Endothelial cell of umbilical vein (primary cell): ENCODE measurements at regions of chr7 and their contacts with region 1.

Region 1: GRCh38 chr7:101602484-101603241 is 26.4 kb downstream of the MYL10 start:
- DNase-seq: peak; percentile 64
- H3K4me3 ChIP-seq: no peak overlapping the region
- H3K27ac ChIP-seq: no peak overlapping the region
- H3K4me1 ChIP-seq: no peaks in the 10 kb centered on the region
- H3K27me3 ChIP-seq: no peaks in the 10 kb centered on the region
- CTCF ChIP-seq: peak; percentile 87 to 99
- POLR2A ChIP-seq: no peak

Region 2: GRCh38 chr7:101395376-101395775 is 207.3 kb before region 1 on chr7:
- CTCF ChIA-PET with region 1: no interaction called
- POLR2A ChIA-PET with region 1: no interaction called
- dilution Hi-C with region 1: no loop called
- intact Hi-C with region 1: no loop called
- DNase-seq: no peak
- H3K4me3 ChIP-seq: no peak overlapping the region
- H3K27ac ChIP-seq: no peak overlapping the region
- H3K4me1 ChIP-seq: no peaks in the 10 kb centered on the region
- H3K27me3 ChIP-seq: peaks cover 4 to 6% of the 10 kb centered on the region in 2 experiments
- CTCF ChIP-seq: no peak
- POLR2A ChIP-seq: no peak

Region 3: DNA sequence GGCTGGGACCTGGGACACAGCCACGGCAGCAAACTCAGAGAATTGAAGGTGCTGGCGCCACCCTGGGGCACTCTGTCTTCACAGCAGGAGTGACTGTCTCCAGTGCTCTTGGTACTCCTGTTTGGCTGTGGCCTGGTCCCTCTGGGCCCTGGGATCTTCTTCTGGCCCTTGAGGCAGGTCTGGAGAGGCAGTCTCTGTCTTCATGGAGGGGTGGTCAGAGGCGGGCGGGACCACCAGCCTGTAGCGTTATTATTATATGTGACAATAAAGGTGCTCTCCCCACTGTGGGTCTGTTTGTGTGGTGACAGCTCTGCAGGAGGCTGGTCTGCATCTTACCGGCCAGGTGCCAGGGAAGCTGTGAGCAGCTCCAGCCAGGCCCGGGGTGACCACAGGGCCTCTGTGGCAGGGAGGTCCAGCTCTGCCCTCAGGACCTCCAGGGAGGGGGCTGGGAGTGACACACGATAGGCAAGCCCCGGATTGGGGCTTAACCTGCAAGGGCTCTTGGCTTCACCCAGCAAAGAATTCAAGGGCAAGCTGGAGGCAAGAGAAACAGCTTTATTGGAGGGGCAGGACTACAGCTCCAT is 43.8 kb before region 1 on chr7:
- CTCF ChIA-PET with region 1: no interaction called
- POLR2A ChIA-PET with region 1: no interaction called
- dilution Hi-C with region 1: no loop called
- intact Hi-C with region 1: no loop called
- DNase-seq: no peak
- H3K4me3 ChIP-seq: no peak overlapping the region
- H3K27ac ChIP-seq: no peak overlapping the region
- H3K4me1 ChIP-seq: no peaks in the 10 kb centered on the region
- H3K27me3 ChIP-seq: peaks cover 0 to 4% of the 10 kb centered on the region in 2 experiments
- CTCF ChIP-seq: peak in 1 of 2 donors; percentile 6
- POLR2A ChIP-seq: no peak

Region 4: GRCh38 chr7:101681170-101682007 is 78.7 kb after region 1 on chr7:
- CTCF ChIA-PET with region 1: interaction called, 14 read pairs
- POLR2A ChIA-PET with region 1: no interaction called
- dilution Hi-C with region 1: no loop called
- intact Hi-C with region 1: loop called (anchors 5 kb)
- DNase-seq: peak; percentile 88
- H3K4me3 ChIP-seq: no peak overlapping the region
- H3K27ac ChIP-seq: no peak overlapping the region
- H3K4me1 ChIP-seq: peaks cover 11% of the 10 kb centered on the region
- H3K27me3 ChIP-seq: no peaks in the 10 kb centered on the region
- CTCF ChIP-seq: no peak
- POLR2A ChIP-seq: no peak

Region 5: GRCh38 chr7:102236592-102237287 is 634.1 kb after region 1 on chr7:
- CTCF ChIA-PET with region 1: interaction called, 25 read pairs
- POLR2A ChIA-PET with region 1: no interaction called
- dilution Hi-C with region 1: no loop called
- intact Hi-C with region 1: loop called (anchors 1 kb)
- DNase-seq: peak; percentile 57
- H3K4me3 ChIP-seq: no peak overlapping the region
- H3K27ac ChIP-seq: no peak overlapping the region
- H3K4me1 ChIP-seq: no peaks in the 10 kb centered on the region
- H3K27me3 ChIP-seq: no peaks in the 10 kb centered on the region
- CTCF ChIP-seq: peak; percentile 69 to 79
- POLR2A ChIP-seq: no peak

Region 6: GRCh38 chr7:102272075-102272917 is 669.6 kb after region 1 on chr7:
- CTCF ChIA-PET with region 1: interaction called, 16 read pairs
- POLR2A ChIA-PET with region 1: no interaction called
- dilution Hi-C with region 1: no loop called
- intact Hi-C with region 1: loop called (anchors 1 kb)
- DNase-seq: peak; percentile 56
- H3K4me3 ChIP-seq: no peak overlapping the region
- H3K27ac ChIP-seq: no peak overlapping the region
- H3K4me1 ChIP-seq: no peaks in the 10 kb centered on the region
- H3K27me3 ChIP-seq: no peaks in the 10 kb centered on the region
- CTCF ChIP-seq: peak; percentile 89 to 92
- POLR2A ChIP-seq: no peak